Activated CD4-positive, alpha-beta memory T cell treated with anti-CD3 and anti-CD28 coated beads, Interleukin-2, amount 10 ng/mL, durations not matched to agents 7 days and 5 days (primary cell): ENCODE measurements at regions of chr3 and their contacts with region 1.

Region 1: GRCh38 chr3:33074217-33075067 is 22.5 kb downstream of the GLB1 start:
- DNase-seq: peak; percentile 75
- H3K4me3 Mint-ChIP-seq: no peak overlapping the region
- H3K27ac Mint-ChIP-seq: no peak overlapping the region
- H3K4me1 Mint-ChIP-seq: peaks cover 51% of the 10 kb centered on the region
- H3K27me3 Mint-ChIP-seq: peaks cover 2% of the 10 kb centered on the region

Region 2: GRCh38 chr3:32816439-32817256 is 257.8 kb before region 1 on chr3:
- CTCF ChIA-PET with region 1: no interaction called
- POLR2A ChIA-PET with region 1: no interaction called
- DNase-seq: no peak
- H3K4me3 Mint-ChIP-seq: peak overlapping the region; percentile 54
- H3K27ac Mint-ChIP-seq: no peak overlapping the region
- H3K4me1 Mint-ChIP-seq: peaks cover 31% of the 10 kb centered on the region
- H3K27me3 Mint-ChIP-seq: peaks cover 67% of the 10 kb centered on the region

Region 3: GRCh38 chr3:33023172-33024136 is 51.0 kb before region 1 on chr3:
- CTCF ChIA-PET with region 1: interaction called, 105 read pairs
- POLR2A ChIA-PET with region 1: no interaction called
- DNase-seq: no peak
- H3K4me3 Mint-ChIP-seq: peak overlapping the region; percentile 6
- H3K27ac Mint-ChIP-seq: peak overlapping the region; percentile 56
- H3K4me1 Mint-ChIP-seq: peaks cover 58% of the 10 kb centered on the region
- H3K27me3 Mint-ChIP-seq: no peaks in the 10 kb centered on the region

Region 4: DNA sequence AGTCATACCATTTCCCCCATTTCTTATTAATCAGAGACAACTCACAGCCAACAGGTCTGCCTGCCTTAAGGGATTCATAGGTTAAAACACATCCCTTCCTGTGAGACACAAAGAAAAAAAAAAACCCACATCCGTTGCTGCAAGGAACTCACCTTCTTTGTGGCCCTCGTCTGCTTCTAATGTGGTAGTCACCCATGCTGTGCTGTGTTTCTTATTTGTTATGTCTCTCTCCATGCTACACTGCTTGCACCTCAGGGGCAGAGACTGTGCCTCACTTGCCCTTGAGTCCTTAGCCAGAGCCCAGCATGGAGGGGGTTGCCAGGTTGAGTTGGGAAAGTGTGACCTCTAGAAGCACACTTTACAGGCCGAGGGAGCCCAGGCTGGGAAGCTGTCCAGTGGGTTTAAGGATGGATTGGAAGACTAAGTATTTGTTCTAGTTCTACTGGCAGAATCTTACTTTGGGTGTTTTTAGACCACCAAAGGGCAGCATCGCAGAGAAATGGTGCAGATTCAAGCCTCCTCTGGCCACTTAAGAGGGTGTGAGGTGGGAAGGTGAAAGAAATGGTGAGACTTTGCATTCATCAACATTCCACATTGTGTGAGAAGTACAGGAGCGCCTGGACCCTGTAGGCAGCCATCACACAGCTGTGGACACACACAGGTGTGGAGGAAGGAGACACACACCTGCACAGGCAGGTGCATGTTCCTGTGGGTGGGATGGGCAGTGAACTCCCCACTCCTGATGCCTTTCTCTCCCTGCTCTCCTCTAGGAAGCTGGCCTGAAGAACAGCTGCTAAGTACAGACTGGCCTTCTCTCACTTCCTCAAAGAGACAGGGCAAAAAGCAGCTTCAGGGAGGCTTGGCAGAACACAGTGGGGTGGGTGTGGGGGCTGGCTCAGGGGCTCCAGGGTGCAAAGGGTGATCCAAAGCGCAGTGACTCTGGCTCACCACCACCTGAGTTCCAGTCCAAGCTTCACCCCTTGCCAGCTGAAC is 26.3 kb before region 1 on chr3:
- CTCF ChIA-PET with region 1: interaction called, 49 read pairs
- POLR2A ChIA-PET with region 1: interaction called, 7 read pairs
- DNase-seq: peak; percentile 68
- H3K4me3 Mint-ChIP-seq: peak overlapping the region; percentile 60
- H3K27ac Mint-ChIP-seq: peak overlapping the region; percentile 98
- H3K4me1 Mint-ChIP-seq: peaks cover 82% of the 10 kb centered on the region
- H3K27me3 Mint-ChIP-seq: no peaks in the 10 kb centered on the region

Region 5: GRCh38 chr3:33089515-33089914 is 15.1 kb after region 1 on chr3:
- CTCF ChIA-PET with region 1: interaction called, 14 read pairs
- POLR2A ChIA-PET with region 1: no interaction called
- DNase-seq: no peak
- H3K4me3 Mint-ChIP-seq: no peak overlapping the region
- H3K27ac Mint-ChIP-seq: no peak overlapping the region
- H3K4me1 Mint-ChIP-seq: peaks cover 56% of the 10 kb centered on the region
- H3K27me3 Mint-ChIP-seq: no peaks in the 10 kb centered on the region